IMR-90 (cell line): ENCODE measurements at regions of chr7 and their contacts with region 1.

Region 1: DNA sequence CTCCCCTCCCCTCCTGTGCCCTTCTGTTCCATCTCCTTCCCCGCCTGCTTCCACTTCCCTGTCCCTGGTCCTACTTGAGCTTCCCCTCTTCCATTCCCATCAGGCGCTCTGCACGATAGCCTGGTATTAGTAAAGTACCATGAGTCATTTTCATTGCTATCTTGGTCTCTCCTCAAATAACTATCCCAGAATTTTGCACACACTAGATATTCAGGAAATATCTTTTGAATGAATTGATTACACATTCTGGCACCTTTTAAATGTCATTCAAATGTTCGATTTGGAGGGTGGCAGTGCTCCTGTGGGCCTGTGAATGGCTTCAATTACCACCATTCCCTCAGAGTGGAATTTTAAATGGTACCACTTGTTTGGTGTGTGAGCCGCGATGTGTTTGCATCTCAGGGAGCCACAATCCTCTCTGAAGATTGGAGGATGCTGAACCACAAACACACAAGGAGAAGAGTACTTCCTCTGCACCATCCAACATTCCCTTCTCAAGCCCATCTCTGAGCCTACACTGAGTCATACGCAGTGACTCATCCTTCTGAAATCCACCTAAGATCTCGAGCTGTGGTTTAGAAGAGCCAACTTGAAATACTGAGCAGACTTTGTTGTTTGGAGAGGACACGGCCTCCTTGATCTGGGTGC is 81.7 kb downstream of the BMPER start:
- DNase-seq: peak; percentile 100
- ATAC-seq: peak; percentile 94
- H3K4me3 ChIP-seq: no peak overlapping the region
- H3K27ac ChIP-seq: peak overlapping the region; percentile 83
- H3K4me1 ChIP-seq: peaks cover 6% of the 10 kb centered on the region
- H3K27me3 ChIP-seq: no peaks in the 10 kb centered on the region
- CTCF ChIP-seq: no peak
- POLR2A ChIP-seq: no peak
- RAD21 ChIP-seq: peak; percentile 6; the same call in 1 of the 2 replicates

Region 2: DNA sequence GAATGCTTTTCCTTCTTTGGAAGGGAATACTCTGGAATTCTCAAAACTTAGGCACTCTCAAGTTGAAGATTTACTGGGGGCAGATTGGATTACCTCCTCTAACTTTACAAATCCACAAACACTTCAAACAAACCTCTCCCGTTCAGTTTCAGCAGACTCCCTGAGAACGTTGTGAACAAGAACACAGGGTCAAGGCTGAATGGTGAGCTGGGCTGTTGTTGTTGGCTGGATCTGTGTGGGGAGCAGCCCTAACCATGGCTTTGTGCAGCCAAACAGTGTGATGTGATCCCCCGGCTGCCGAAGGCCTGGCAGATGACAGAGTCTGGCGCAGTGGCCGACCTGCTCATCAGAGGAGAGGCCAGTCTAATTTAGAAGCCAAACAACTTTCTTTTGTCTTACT is 11.4 kb after region 1 on chr7:
- CTCF ChIA-PET with region 1: no interaction called
- POLR2A ChIA-PET with region 1: interaction called, 10 read pairs
- dilution Hi-C with region 1: no loop called
- in situ Hi-C with region 1: no loop called
- intact Hi-C with region 1: no loop called
- DNase-seq: no peak
- ATAC-seq: no peak; the same call in 1 of the 2 replicates
- H3K4me3 ChIP-seq: no peak overlapping the region
- H3K27ac ChIP-seq: no peak overlapping the region
- H3K4me1 ChIP-seq: no peaks in the 10 kb centered on the region
- H3K27me3 ChIP-seq: no peaks in the 10 kb centered on the region
- CTCF ChIP-seq: no peak
- POLR2A ChIP-seq: no peak
- RAD21 ChIP-seq: no peak

Region 3: GRCh38 chr7:34061175-34061574 is 74.1 kb after region 1 on chr7:
- CTCF ChIA-PET with region 1: no interaction called
- POLR2A ChIA-PET with region 1: no interaction called
- dilution Hi-C with region 1: no loop called
- in situ Hi-C with region 1: no loop called
- intact Hi-C with region 1: loop called (anchors 2 kb)
- DNase-seq: peak; percentile 93
- ATAC-seq: peak; percentile 65
- H3K4me3 ChIP-seq: no peak overlapping the region
- H3K27ac ChIP-seq: no peak overlapping the region; the same call in 1 of the 2 replicates
- H3K4me1 ChIP-seq: peaks cover 36% of the 10 kb centered on the region
- H3K27me3 ChIP-seq: no peaks in the 10 kb centered on the region
- CTCF ChIP-seq: no peak
- POLR2A ChIP-seq: no peak
- RAD21 ChIP-seq: no peak

Region 4: GRCh38 chr7:34069630-34070270 is 82.7 kb after region 1 on chr7:
- CTCF ChIA-PET with region 1: interaction called, 18 read pairs
- POLR2A ChIA-PET with region 1: interaction called, 7 read pairs
- dilution Hi-C with region 1: no loop called
- in situ Hi-C with region 1: no loop called
- intact Hi-C with region 1: loop called (anchors 2 kb)
- DNase-seq: peak; percentile 61
- ATAC-seq: 0 out of 2 replicates have a peak, but pooled peaks have one; percentile 3
- H3K4me3 ChIP-seq: no peak overlapping the region
- H3K27ac ChIP-seq: no peak overlapping the region
- H3K4me1 ChIP-seq: peaks cover 20% of the 10 kb centered on the region
- H3K27me3 ChIP-seq: no peaks in the 10 kb centered on the region
- CTCF ChIP-seq: no peak
- POLR2A ChIP-seq: no peak
- RAD21 ChIP-seq: no peak

Region 5: GRCh38 chr7:34158368-34159155 is 171.5 kb after region 1 on chr7:
- CTCF ChIA-PET with region 1: interaction called, 6 read pairs
- POLR2A ChIA-PET with region 1: no interaction called
- dilution Hi-C with region 1: no loop called
- in situ Hi-C with region 1: no loop called
- intact Hi-C with region 1: loop called (anchors 5 kb)
- DNase-seq: peak; percentile 41
- ATAC-seq: 0 out of 2 replicates have a peak, but pooled peaks have one; percentile 4
- H3K4me3 ChIP-seq: no peak overlapping the region
- H3K27ac ChIP-seq: no peak overlapping the region
- H3K4me1 ChIP-seq: peaks cover 23% of the 10 kb centered on the region
- H3K27me3 ChIP-seq: no peaks in the 10 kb centered on the region
- CTCF ChIP-seq: peak; percentile 15; the same call in 1 of the 2 replicates
- POLR2A ChIP-seq: no peak
- RAD21 ChIP-seq: no peak